Astrocyte of the cerebellum (primary cell): ENCODE measurements at regions of chr2 and their contacts with region 1.

Region 1: DNA sequence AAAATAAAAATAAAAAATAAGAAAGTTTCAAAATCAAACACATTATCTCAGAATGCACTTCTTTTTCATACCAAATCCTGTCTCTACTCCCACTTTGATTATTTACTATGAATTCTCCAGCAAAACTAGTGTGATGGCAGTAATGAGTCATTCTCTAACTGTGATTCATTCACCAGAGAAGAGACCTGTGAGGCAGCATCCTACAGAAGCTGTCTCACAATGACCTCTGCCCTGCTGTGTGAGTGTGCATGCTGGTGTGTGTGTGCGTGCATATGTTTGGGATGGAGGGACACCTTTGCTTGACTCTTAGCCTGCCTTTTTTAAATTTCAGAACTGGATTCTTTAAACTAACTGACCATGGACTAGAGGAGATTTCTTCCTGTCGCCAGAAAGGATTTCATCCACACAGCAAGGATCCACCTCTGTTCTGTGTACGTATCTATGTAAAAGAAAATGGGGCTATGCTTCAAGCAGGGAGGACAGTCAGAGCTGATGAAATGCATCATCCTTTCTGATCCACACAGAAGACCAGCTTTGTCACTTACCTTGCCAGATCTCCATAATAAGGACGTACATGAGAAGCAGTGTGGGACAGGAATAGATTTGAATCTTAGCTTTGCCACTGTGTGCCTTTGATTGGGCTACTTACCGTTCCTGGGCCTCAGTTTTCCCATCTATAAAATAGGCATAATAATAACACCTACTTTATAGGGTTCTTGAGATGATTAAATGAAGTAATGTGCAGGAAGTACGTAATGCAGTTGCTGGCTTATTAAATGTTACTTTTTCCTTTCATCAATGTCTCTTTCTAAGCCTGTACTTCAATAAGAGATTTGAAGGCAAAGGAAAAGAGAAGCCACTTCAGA is 31.2 kb downstream of the STAMBP start:
- DNase-seq: peak; percentile 26
- H3K4me3 ChIP-seq: no peak overlapping the region
- CTCF ChIP-seq: no peak

Region 2: DNA sequence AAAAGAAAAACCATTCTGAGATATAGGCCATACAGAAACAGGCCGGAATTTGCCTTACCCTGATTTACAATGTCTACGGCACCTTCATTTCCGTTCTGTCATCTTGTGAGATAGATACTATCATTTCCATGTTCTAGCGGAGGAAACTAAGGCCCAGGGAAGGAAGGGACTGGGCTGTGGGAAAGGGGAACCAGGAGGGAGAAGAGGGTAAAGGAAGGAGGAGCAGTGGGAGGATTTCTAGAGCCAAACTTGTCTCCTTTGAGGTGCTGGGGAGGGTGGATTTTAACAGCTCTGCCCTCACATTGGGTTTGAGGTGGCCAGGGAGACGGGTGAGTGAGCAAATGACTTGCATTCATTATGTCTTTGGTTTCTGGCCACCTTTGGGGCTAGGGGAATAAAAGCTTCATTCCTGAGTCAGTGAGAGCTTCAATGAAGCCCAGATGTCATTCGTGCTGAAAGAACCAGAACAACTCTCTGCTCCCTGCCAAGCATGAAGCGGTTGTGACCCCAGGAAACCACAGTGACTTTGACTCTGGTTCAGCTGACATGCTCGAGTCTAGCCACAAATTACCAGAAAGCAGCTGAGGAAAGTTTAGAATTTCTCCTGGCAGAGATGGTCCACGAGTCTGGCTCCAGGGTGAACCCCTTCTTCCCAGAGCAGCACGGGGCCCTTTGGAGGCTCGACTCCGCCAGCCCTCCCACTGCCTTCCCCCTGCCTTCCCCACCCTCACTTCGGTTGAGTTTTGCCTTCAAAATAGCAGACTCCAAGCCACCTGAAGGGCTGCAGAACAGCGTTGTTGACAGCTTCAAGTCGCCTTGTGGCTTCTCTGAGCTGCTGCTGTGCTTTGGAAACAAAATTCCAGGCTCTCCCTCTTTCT is 36.6 kb after region 1 on chr2:
- in situ Hi-C with region 1: loop called (anchors 5 kb)
- DNase-seq: peak; percentile 98
- H3K4me3 ChIP-seq: no peak overlapping the region
- CTCF ChIP-seq: no peak